ENCODE measurements at regions of chr17 and their contacts with region 1.

Region 1: GRCh38 chr17:76014184-76014924 is 12.8 kb downstream of the EVPL start:
- DNase-seq: peak; percentile 54 to 68
- ATAC-seq: peak; percentile 65 to 88 (median 82)
- H3K4me3 ChIP-seq: no peak overlapping the region
- H3K27ac ChIP-seq: no peak overlapping the region
- H3K4me1 ChIP-seq: peaks cover 0 to 6% (median 4%) of the 10 kb centered on the region in 9 donors
- H3K27me3 ChIP-seq: peaks cover 0 to 12% (median 0%) of the 10 kb centered on the region in 7 donors
- CTCF ChIP-seq: peak; percentile 89 to 98 (median 95)

Region 2: DNA sequence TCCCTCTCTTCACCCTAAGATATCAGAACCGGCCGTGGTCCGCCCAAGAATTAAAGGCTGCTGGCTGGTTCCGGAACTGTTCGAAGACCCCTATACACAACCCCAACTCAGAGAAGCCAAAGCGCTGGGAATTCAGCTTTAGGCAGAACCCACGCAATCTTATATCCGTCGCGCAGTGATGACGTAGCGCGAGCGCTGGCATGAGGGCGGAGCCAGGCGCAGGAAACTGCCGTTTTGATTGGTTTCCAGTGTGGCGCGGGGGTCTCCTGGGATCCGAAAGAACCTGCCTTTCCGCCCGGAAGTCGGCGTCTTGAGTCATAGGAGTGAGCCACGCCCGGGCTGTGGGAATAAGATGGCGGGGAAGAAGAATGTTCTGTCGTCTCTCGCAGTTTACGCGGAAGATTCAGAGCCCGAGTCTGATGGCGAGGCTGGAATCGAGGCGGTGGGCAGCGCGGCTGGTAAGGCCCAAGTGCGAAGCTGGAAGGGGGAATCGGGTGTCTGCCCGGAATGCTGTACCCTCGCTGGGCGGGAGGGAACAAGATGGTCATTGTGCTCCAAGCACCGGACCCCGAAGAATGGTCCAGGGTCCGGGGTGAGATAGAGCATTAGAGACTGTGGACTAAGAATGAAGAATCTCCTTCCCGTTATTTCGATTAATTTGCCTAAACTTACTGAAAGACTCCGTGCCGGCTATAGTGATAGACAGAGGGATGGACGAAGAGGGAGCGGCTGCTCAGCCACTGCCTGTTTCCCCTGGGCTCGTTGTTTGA is 347.1 kb before region 1 on chr17 and contains the starts of genes RECQL5 and SAP30BP:
- intact Hi-C with region 1: no loop called
- DNase-seq: peak; percentile 98
- ATAC-seq: peak; percentile 99 to 100 (median 100)
- H3K4me3 ChIP-seq: peak within 1 kb of the TSS; percentile 62 to 100 (median 86)
- H3K27ac ChIP-seq: peak within 1 kb of the TSS; percentile 46 to 94 (median 86)
- H3K4me1 ChIP-seq: peaks cover 12 to 36% (median 24%) of the 10 kb centered on the region in 9 donors
- H3K27me3 ChIP-seq: no peaks in the 10 kb centered on the region
- CTCF ChIP-seq: no peak
- total RNA-seq, gene RECQL5: 9.2 to 14.4 (median 10.7) TPM
- total RNA-seq, gene SAP30BP: 41.7 to 64.4 (median 55.8) TPM

Region 3: DNA sequence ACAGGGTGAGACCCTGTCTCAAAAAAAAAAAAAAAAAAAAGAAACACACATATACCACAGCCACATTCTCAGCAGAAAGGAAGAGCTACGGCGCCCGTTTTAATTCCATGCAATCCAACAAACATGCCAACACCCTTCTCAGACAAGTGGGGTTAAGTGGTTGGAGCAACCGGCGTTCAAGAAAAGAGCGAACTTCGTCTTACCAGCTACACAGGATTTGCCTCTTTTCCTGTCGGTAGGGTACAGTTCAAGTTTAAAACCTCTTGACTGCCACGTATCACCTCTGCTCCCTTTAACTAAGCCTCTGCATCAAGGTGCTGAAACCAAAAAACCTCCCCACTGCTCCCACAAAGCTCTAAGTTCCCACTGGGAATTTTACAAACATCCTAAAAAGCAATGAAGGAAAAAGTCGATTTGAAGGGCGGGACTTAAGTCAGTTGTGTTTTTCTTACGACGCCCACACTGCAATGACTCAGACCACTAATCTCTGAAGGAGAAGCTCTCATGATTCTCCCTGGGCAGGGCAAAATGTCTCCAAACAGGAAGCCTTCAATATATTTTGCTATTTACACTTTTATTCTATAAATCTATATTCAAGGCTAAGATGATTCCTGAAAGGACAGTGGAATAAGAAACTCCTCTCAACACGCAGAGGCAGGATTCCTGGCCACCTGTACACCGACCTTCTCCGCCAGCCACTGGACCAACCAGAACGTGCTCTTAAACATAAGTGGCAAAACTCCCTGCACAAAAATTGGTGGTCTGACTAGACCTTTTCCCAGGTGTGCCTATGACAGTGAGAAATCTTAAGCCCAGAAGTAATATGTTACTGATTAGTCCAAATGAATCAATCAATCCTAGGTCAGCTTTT is 39.1 kb after region 1 on chr17:
- intact Hi-C with region 1: loop called in 1 of 10 experiments (anchors 2 kb)
- DNase-seq: no peak
- ATAC-seq: no peak
- H3K4me3 ChIP-seq: no peak overlapping the region
- H3K27ac ChIP-seq: no peak overlapping the region
- H3K4me1 ChIP-seq: peaks cover 0 to 3% (median 0%) of the 10 kb centered on the region in 9 donors
- H3K27me3 ChIP-seq: no peaks in the 10 kb centered on the region
- CTCF ChIP-seq: no peak

Region 4: DNA sequence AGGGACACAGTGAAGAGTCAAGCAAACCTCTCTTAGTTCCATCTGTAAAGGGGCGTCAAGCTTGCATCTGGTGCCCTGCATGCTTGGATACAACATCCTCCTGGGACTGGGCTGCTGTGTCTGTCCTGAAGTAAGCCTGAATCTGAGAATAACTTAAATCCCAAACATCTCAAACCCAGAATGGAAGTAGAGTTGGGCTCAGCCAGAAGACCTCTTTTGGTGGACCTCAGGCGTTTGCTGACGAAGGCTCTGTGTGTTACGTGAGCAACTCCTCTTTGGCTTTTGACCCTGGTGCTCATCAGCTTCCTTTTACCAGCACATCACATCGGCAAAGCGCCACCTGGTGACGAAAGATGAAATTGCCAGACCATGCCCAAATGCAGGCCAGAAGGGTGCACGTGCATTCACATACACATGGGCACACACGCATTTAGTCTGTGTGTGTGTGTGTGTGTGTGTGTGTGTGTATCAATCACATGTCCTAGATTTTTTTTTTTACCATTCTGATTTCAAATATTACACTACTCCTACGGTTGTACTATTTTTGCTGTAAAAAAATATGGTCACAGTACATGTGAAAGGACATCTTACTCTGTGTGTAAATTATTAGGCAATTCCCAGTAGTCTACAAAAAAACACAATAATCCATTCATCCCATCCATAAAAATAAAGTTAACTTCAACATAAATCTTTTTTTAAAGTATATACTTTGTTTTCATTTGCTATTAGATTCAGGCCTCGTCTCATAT is 167.8 kb after region 1 on chr17:
- intact Hi-C with region 1: loop called in 1 of 10 experiments (anchors 10 kb)
- DNase-seq: peak; percentile 85 to 89
- ATAC-seq: peak; percentile 80 to 92 (median 86)
- H3K4me3 ChIP-seq: no peak overlapping the region
- H3K27ac ChIP-seq: peak overlapping the region in 1 of 10 donors; percentile 61
- H3K4me1 ChIP-seq: peaks cover 0 to 23% (median 3%) of the 10 kb centered on the region in 9 donors
- H3K27me3 ChIP-seq: no peaks in the 10 kb centered on the region
- CTCF ChIP-seq: peak; percentile 71 to 93 (median 87)

Region 5: GRCh38 chr17:76296186-76296585 is 281.8 kb after region 1 on chr17:
- intact Hi-C with region 1: loop called in 7 of 10 experiments (anchors 5 to 10 kb)
- DNase-seq: no peak
- ATAC-seq: peak in 7 of 8 donors; percentile 41 to 65 (median 49)
- H3K4me3 ChIP-seq: no peak overlapping the region
- H3K27ac ChIP-seq: peak overlapping the region in 1 of 10 donors; percentile 31
- H3K4me1 ChIP-seq: peaks cover 0 to 14% (median 6%) of the 10 kb centered on the region in 9 donors
- H3K27me3 ChIP-seq: no peaks in the 10 kb centered on the region
- CTCF ChIP-seq: no peak